ENCODE measurements at regions of chr12 and their contacts with region 1.

Region 1: DNA sequence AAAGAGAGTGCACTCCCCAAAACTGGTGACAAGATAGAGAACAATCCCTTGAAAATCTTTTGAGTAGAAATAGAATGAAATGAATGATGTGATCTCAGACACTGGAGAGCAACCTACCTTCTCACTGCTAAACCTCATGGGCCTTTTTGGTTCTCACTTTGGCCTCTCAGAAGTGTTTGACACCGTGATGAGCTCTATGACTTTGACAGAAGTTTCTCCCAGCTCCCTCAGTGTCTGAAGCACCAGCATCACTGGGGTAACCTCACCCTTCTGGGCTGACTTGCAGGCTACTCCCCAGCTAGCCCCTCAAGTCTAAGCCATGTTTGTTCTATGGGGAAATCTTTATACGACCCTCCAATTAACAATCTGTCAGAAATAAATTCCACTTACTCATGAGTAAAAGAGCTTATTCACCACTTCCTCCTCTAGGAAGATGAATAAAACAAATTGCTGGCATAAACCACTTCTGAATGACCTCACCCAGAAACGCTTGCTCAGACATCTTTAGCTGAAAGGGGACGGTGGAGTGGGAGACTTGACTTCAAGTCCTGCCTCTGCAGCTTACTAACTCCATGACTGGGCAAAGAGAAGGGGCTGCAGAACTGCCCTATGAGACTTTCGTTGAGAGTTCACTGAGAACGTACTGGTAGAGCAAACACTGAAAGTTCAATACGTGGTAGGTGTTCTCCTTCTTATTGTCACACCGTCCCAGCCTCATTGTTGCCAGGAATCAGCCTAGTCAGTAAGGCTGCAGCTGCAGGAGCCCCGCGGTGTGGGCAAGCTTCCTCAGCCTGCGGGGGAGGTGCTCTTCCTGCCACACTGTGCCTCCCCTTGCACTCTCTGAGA is 46.5 kb downstream of the ST8SIA1 start:
- DNase-seq: peak; percentile 50
- H3K4me3 Mint-ChIP-seq: peak overlapping the region; percentile 45
- H3K27ac Mint-ChIP-seq: peak overlapping the region; percentile 47
- H3K4me1 Mint-ChIP-seq: peaks cover 22% of the 10 kb centered on the region
- H3K27me3 Mint-ChIP-seq: no peaks in the 10 kb centered on the region

Region 2: GRCh38 chr12:21925296-21925913 is 362.6 kb before region 1 on chr12:
- CTCF ChIA-PET with region 1: no interaction called
- intact Hi-C with region 1: no loop called
- DNase-seq: no peak
- H3K4me3 Mint-ChIP-seq: no peak overlapping the region
- H3K27ac Mint-ChIP-seq: no peak overlapping the region
- H3K4me1 Mint-ChIP-seq: no peaks in the 10 kb centered on the region
- H3K27me3 Mint-ChIP-seq: peaks cover 20% of the 10 kb centered on the region

Region 3: GRCh38 chr12:22018860-22019259 is 269.1 kb before region 1 on chr12:
- CTCF ChIA-PET with region 1: no interaction called
- intact Hi-C with region 1: no loop called
- DNase-seq: no peak
- H3K4me3 Mint-ChIP-seq: no peak overlapping the region
- H3K27ac Mint-ChIP-seq: no peak overlapping the region
- H3K4me1 Mint-ChIP-seq: no peaks in the 10 kb centered on the region
- H3K27me3 Mint-ChIP-seq: no peaks in the 10 kb centered on the region

Region 4: GRCh38 chr12:22321638-22322037 is 33.6 kb after region 1 on chr12:
- CTCF ChIA-PET with region 1: interaction called, 3 read pairs
- intact Hi-C with region 1: loop called (anchors 1 kb)
- DNase-seq: peak; percentile 62
- H3K4me3 Mint-ChIP-seq: no peak overlapping the region
- H3K27ac Mint-ChIP-seq: no peak overlapping the region
- H3K4me1 Mint-ChIP-seq: peaks cover 13% of the 10 kb centered on the region
- H3K27me3 Mint-ChIP-seq: no peaks in the 10 kb centered on the region